ENCODE measurements at regions of chr12 and their contacts with region 1.

Region 1: DNA sequence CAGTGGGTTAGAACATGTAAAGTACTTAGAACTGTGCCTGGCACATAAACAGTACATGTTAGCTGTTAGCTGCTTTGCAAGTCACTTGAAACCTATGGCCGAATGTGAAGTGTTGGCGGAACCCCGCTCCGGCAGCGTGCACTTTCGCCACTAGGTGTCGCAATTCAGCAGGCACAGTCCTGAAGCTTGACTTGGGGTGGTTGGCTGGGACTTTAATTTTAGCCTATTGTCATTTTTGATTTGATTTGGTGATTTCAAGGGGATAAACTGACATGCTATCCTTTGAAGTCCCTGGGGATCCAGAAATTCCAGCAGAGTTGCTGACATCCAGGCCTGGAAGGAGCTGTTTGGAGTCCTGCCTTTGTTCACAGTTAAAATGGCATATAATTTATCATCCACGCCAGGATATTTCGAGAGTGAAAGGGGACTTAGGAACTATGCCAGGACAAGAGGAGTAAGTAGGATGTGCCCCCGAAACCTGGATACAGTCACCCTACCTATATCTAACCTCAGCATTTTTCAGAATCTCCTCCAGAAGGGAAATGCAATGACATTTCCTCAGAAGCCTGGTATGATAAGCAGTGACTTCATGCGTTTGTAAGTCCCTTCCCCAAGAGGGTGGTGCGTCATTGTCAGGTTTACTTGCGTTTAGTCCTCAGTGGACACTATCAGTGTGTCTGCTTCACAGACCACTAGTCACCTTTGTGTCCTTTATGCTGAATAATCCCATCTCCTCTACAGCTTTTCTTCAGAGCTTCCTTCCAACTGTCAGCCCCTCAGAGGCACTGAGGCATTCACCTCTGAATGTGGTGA is 3.5 kb upstream of the TSPAN9 start:
- DNase-seq: peak; percentile 72 to 90 (median 82)
- ATAC-seq: peak; percentile 53
- H3K4me3 ChIP-seq: no peak overlapping the region
- H3K4me3 Mint-ChIP-seq: peak overlapping the region; percentile 65
- H3K27ac ChIP-seq: no peak overlapping the region
- H3K27ac Mint-ChIP-seq: no peak overlapping the region
- H3K4me1 ChIP-seq: peaks cover 25% of the 10 kb centered on the region
- H3K4me1 Mint-ChIP-seq: peaks cover 14% of the 10 kb centered on the region
- H3K27me3 ChIP-seq: peaks cover 3% of the 10 kb centered on the region in 2 experiments
- H3K27me3 Mint-ChIP-seq: peaks cover 7% of the 10 kb centered on the region
- CTCF ChIP-seq: peak; percentile 93

Region 2: GRCh38 chr12:2877047-2877952 is 196.3 kb before region 1 on chr12 and contains the starts of genes FOXM1 and RHNO1:
- CTCF ChIA-PET with region 1: no interaction called
- POLR2A ChIA-PET with region 1: no interaction called
- intact Hi-C with region 1: loop called in 1 of 2 experiments (anchors 5 kb)
- DNase-seq: peak; percentile 75 to 92 (median 84)
- ATAC-seq: peak; percentile 80
- H3K4me3 ChIP-seq: peak within 1 kb of the TSS; percentile 80
- H3K4me3 Mint-ChIP-seq: peak within 1 kb of the TSS; percentile 97
- H3K27ac ChIP-seq: peak within 1 kb of the TSS; percentile 81 to 86
- H3K27ac Mint-ChIP-seq: peak within 1 kb of the TSS; percentile 99
- H3K4me1 ChIP-seq: peaks cover 39% of the 10 kb centered on the region
- H3K4me1 Mint-ChIP-seq: peaks cover 30% of the 10 kb centered on the region
- H3K27me3 ChIP-seq: no peaks in the 10 kb centered on the region
- H3K27me3 Mint-ChIP-seq: no peaks in the 10 kb centered on the region
- CTCF ChIP-seq: no peak
- total RNA-seq, gene FOXM1: 0.59 to 0.80 TPM
- total RNA-seq, gene RHNO1: 26.5 to 31.3 TPM

Region 3: GRCh38 chr12:3135522-3136461 is 62.1 kb after region 1 on chr12:
- CTCF ChIA-PET with region 1: interaction called, 3 read pairs
- POLR2A ChIA-PET with region 1: no interaction called
- intact Hi-C with region 1: loop called in 1 of 2 experiments (anchors 5 kb)
- DNase-seq: peak in 12 of 14 experiments; percentile 4 to 74 (median 18)
- ATAC-seq: peak; percentile 51
- H3K4me3 ChIP-seq: no peak overlapping the region
- H3K4me3 Mint-ChIP-seq: no peak overlapping the region
- H3K27ac ChIP-seq: no peak overlapping the region
- H3K27ac Mint-ChIP-seq: no peak overlapping the region
- H3K4me1 ChIP-seq: no peaks in the 10 kb centered on the region
- H3K4me1 Mint-ChIP-seq: peaks cover 1% of the 10 kb centered on the region
- H3K27me3 ChIP-seq: peaks cover 20 to 38% of the 10 kb centered on the region in 2 experiments
- H3K27me3 Mint-ChIP-seq: peaks cover 49% of the 10 kb centered on the region
- CTCF ChIP-seq: peak; percentile 83

Region 4: DNA sequence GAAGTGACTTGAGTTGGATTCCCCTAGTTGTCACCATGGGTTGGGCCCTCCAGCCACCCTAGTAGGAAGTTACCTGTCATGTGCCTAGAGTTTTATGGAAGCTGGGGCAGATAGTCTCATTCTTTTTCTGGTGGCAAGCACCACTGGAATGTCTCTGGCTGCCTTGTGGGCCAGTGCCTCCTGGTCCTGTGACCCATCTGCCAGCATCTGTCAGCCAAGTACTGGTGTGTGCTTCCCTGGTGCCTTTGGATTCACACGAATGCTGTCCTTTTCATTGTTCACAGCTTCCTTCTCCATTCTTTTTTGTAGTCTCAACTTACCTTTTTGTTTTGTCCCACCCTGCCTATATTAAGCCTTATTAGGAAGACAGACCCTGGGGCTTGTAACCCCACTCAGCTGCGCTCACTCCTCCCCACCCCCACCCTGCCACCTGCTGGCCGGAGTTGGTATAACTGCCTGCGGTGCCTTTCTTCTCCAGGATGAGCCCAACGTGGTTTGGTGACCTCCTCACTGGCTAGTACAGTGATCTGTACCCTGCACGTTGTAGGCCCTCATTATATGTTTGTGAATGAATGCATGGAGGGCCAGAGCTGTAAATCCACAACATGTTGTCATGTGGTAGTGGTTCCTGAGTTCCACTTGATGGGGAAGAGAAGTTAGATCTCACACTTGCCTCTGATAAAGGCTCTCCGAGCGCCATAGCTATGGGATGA is 129.2 kb after region 1 on chr12:
- CTCF ChIA-PET with region 1: no interaction called
- POLR2A ChIA-PET with region 1: no interaction called
- intact Hi-C with region 1: loop called (anchors 1 kb)
- DNase-seq: peak; percentile 12 to 66 (median 44)
- ATAC-seq: no peak
- H3K4me3 ChIP-seq: no peak overlapping the region
- H3K4me3 Mint-ChIP-seq: no peak overlapping the region
- H3K27ac ChIP-seq: no peak overlapping the region
- H3K27ac Mint-ChIP-seq: no peak overlapping the region
- H3K4me1 ChIP-seq: peaks cover 6% of the 10 kb centered on the region
- H3K4me1 Mint-ChIP-seq: peaks cover 4% of the 10 kb centered on the region
- H3K27me3 ChIP-seq: peaks cover 30 to 36% of the 10 kb centered on the region in 2 experiments
- H3K27me3 Mint-ChIP-seq: peaks cover 44% of the 10 kb centered on the region
- CTCF ChIP-seq: peak; percentile 76

Region 5: GRCh38 chr12:3275171-3276041 is 201.8 kb after region 1 on chr12:
- CTCF ChIA-PET with region 1: interaction called, 11 read pairs
- POLR2A ChIA-PET with region 1: interaction called, 7 read pairs
- intact Hi-C with region 1: loop called (anchors 1 kb)
- DNase-seq: peak; percentile 43 to 78 (median 64)
- ATAC-seq: peak; percentile 66
- H3K4me3 ChIP-seq: no peak overlapping the region
- H3K4me3 Mint-ChIP-seq: no peak overlapping the region
- H3K27ac ChIP-seq: no peak overlapping the region
- H3K27ac Mint-ChIP-seq: no peak overlapping the region
- H3K4me1 ChIP-seq: peaks cover 6% of the 10 kb centered on the region
- H3K4me1 Mint-ChIP-seq: no peaks in the 10 kb centered on the region
- H3K27me3 ChIP-seq: peaks cover 0 to 7% of the 10 kb centered on the region in 2 experiments
- H3K27me3 Mint-ChIP-seq: peaks cover 19% of the 10 kb centered on the region
- CTCF ChIP-seq: peak; percentile 98

Region 6: GRCh38 chr12:4320853-4321701 is 1247.4 kb after region 1 on chr12 and contains the start of gene TIGAR:
- CTCF ChIA-PET with region 1: no interaction called
- POLR2A ChIA-PET with region 1: no interaction called
- intact Hi-C with region 1: loop called in 1 of 2 experiments (anchors 5 kb)
- DNase-seq: peak; percentile 75 to 97 (median 86)
- ATAC-seq: peak; percentile 94
- H3K4me3 ChIP-seq: peak within 1 kb of the TSS; percentile 85
- H3K4me3 Mint-ChIP-seq: peak within 1 kb of the TSS; percentile 84
- H3K27ac ChIP-seq: peak within 1 kb of the TSS; percentile 80 to 86
- H3K27ac Mint-ChIP-seq: peak within 1 kb of the TSS; percentile 84
- H3K4me1 ChIP-seq: peaks cover 26% of the 10 kb centered on the region
- H3K4me1 Mint-ChIP-seq: peaks cover 44% of the 10 kb centered on the region
- H3K27me3 ChIP-seq: no peaks in the 10 kb centered on the region
- H3K27me3 Mint-ChIP-seq: no peaks in the 10 kb centered on the region
- CTCF ChIP-seq: no peak
- total RNA-seq, gene TIGAR: 5.3 to 7.1 TPM

Region 7: DNA sequence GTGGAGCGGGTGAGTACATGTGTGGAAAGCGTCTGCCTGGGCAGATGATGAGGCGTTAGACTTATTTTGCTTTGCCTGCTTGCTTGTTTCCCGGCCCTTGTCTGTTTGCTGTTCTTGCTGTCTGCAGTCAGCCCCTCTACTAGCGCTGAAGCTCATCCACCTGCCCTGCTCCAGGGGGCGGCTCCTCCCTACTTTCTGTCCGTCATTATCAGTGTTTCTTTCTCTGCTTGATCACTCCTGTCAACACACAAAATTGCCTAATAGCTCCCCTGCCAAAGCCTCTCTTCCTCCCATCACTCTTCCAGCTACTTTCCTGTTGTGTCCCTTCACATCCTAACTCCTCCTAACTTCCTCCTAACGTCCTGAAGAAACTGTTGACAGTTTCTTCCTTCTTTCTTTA is 1611.7 kb after region 1 on chr12:
- CTCF ChIA-PET with region 1: no interaction called
- POLR2A ChIA-PET with region 1: no interaction called
- intact Hi-C with region 1: no loop called
- DNase-seq: no peak
- ATAC-seq: no peak
- H3K4me3 ChIP-seq: no peak overlapping the region
- H3K4me3 Mint-ChIP-seq: no peak overlapping the region
- H3K27ac ChIP-seq: no peak overlapping the region
- H3K27ac Mint-ChIP-seq: no peak overlapping the region
- H3K4me1 ChIP-seq: no peaks in the 10 kb centered on the region
- H3K4me1 Mint-ChIP-seq: no peaks in the 10 kb centered on the region
- H3K27me3 ChIP-seq: no peaks in the 10 kb centered on the region
- H3K27me3 Mint-ChIP-seq: no peaks in the 10 kb centered on the region
- CTCF ChIP-seq: no peak